ENCODE measurements at regions of chr4 and their contacts with region 1.

Region 1: DNA sequence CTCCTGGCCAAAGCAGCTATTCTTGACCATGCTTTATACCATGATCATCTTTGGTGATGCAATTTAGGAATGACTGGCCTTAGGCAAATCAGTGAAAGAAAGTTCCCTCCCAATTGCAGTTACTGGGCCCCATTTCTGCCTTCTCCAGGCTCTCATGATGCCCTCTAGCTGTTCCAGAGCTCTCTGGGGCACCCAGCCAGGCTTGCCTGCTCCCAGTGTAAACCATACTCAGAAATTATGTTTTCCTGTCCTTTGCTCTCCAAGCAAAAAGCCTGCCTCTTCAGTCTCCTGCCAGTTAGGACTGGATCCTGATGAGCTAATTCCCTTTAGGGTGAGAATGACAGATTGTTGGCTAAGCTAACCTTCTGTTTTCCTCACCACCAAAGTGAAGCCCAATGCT is 85.3 kb upstream of the RBPJ start:
- DNase-seq: peak; percentile 72
- H3K4me3 ChIP-seq: no peak overlapping the region
- H3K27ac ChIP-seq: no peak overlapping the region
- H3K4me1 ChIP-seq: peaks cover 2% of the 10 kb centered on the region
- H3K27me3 ChIP-seq: no peaks in the 10 kb centered on the region
- CTCF ChIP-seq: no peak

Region 2: DNA sequence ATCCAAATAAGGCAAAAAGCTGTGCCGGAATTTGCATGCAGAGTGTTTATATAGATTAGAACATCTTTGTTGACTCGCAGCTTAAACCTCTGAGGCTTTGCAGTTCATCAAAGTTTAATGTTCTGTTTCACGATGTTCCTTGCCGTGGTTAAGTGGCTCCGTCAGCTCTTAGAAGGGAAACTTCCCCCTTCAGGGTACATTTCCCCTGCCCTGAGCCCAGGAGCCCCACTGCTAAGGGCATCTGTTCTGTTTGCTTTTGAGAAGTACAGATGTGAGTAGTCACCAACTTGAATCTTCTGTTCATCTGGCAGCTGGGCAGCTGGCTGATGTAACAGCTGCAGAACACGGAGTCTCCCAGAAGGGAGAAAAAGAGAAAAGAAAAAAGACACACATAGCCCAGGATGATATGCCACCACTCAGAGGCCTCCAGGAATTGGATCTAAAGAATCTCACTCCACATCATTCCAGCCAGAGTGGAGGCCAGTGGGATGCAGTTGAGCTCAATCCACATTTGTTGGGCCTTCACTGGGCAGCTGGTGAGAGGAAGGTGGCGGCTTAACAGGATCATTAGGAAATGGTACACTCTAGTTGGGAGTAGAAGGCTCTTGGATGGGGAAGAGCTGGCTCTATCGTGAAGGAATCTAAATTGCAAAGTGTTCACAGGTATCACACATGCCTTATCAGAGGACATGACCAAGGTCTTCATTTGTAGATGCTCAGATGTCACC is 93.4 kb before region 1 on chr4:
- intact Hi-C with region 1: loop called (anchors 10 kb)
- DNase-seq: no peak
- H3K4me3 ChIP-seq: no peak overlapping the region
- H3K27ac ChIP-seq: peak overlapping the region; percentile 14
- H3K4me1 ChIP-seq: no peaks in the 10 kb centered on the region
- H3K27me3 ChIP-seq: no peaks in the 10 kb centered on the region
- CTCF ChIP-seq: no peak

Region 3: GRCh38 chr4:26206339-26206738 is 29.2 kb before region 1 on chr4:
- intact Hi-C with region 1: no loop called
- DNase-seq: no peak
- H3K4me3 ChIP-seq: no peak overlapping the region
- H3K27ac ChIP-seq: no peak overlapping the region
- H3K4me1 ChIP-seq: no peaks in the 10 kb centered on the region
- H3K27me3 ChIP-seq: no peaks in the 10 kb centered on the region
- CTCF ChIP-seq: no peak

Region 4: DNA sequence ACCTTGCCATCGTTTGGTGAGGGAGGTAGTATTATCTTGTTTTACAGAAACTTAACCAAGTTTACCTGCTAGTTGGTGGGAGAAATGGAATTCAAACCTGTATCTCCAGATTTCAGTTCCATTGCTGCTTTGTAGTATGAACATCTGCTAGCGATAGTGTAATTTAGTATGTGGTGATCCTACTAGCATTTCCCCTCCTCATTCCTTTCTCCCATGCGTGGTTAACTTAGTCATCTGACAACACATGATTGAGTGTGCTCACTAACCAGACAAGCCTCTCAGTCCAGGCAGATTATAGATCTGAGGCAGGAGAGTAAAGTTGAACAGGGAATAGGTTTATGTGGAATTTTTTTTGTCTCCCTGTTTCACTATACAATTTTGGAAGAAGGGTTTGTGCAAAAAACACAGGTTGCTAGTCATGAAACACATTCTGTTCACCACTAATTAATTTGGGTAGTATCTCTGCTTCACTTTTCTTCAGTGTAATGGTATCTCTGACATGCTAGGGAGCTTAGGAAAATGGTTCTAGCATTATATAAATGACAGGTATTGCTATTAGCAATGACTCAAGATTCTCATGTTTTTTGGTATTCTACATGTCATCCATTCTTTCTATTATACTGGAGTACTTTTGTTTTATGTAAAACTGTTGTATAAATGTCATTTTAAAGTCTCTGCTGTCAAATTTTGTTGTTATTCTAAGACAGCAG is 107.0 kb after region 1 on chr4:
- intact Hi-C with region 1: no loop called
- DNase-seq: no peak
- H3K4me3 ChIP-seq: no peak overlapping the region
- H3K27ac ChIP-seq: no peak overlapping the region
- H3K4me1 ChIP-seq: no peaks in the 10 kb centered on the region
- H3K27me3 ChIP-seq: no peaks in the 10 kb centered on the region
- CTCF ChIP-seq: no peak

Measured in colonic mucosa (tissue), 4 donors.